Tibial artery (tissue), 4 donors: ENCODE measurements at regions of chr2 and their contacts with region 1.

Region 1: DNA sequence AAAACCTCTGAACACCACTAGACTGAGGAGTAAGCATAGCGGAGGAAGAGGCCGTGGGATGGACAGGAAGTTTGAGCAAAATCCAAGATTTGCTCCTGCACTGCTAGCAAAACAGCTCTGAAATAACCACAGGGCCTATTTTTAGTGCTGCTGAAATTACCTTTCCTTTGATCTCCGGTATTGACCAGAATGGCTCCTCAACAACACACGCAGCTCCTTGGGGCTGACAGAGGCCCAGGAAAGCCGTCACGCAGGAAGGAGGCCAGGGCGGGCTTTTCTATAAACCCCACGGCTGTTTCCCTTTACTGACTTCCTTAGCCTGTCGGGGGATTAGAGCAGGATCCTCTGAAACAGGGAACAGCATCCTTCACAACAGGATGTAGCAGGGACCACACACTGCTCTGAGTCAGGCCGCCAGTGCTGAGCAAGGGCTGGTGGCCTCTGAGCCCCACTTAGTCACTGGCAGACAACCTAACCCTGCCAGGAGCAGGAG is 80.8 kb upstream of the LCLAT1 start:
- DNase-seq: no peak
- H3K4me3 ChIP-seq: no peak overlapping the region
- H3K27ac ChIP-seq: peak overlapping the region; percentile 43 to 79
- H3K4me1 ChIP-seq: peaks cover 0 to 84% (median 47%) of the 10 kb centered on the region in 4 donors
- H3K27me3 ChIP-seq: no peaks in the 10 kb centered on the region
- CTCF ChIP-seq: no peak

Region 2: GRCh38 chr2:29966266-29966665 is 400.0 kb before region 1 on chr2:
- intact Hi-C with region 1: no loop called
- DNase-seq: no peak
- H3K4me3 ChIP-seq: no peak overlapping the region
- H3K27ac ChIP-seq: no peak overlapping the region
- H3K4me1 ChIP-seq: no peaks in the 10 kb centered on the region
- H3K27me3 ChIP-seq: peaks cover 0 to 10% of the 10 kb centered on the region in 2 donors
- CTCF ChIP-seq: no peak

Region 3: GRCh38 chr2:30225131-30225762 is 141.0 kb before region 1 on chr2:
- intact Hi-C with region 1: loop called (anchors 10 kb)
- DNase-seq: no peak
- H3K4me3 ChIP-seq: peak overlapping the region; percentile 17 to 39
- H3K27ac ChIP-seq: peak overlapping the region; percentile 75 to 78
- H3K4me1 ChIP-seq: peaks cover 6 to 36% (median 25%) of the 10 kb centered on the region in 4 donors
- H3K27me3 ChIP-seq: no peaks in the 10 kb centered on the region
- CTCF ChIP-seq: no peak

Region 4: DNA sequence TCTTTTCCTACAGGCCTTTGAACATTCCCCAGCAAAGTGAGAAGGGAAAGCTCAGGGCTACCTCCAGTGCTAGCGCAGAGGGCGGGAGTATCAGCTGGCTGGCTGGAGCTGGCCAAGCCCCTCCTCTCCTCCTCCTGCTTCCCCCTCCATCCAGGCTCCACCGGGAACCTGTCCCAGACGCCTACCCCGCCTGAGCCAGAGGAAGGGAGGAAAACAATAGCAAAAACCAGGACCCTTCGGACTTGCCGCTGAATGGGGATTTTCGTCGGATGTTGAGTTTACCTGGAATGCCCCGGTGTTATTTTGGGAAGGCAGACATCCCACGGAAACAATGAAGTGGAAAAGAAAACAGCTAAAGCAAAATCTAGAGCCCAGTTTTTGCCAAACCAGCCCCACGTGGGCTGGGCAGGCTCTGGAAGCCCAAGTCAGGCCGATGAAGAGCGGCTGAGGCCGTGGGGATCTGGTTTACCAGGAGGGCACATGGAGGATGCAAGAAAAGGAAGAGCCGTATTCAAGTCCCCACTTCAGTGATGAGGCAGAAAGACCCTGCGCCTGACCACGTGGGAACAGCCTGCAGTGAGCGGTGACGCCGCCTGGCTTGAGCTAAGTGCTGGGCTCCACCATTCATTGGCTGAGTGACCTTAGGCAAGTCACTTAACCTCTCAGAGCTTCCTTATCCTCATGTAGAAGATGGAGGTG is 19.6 kb before region 1 on chr2:
- intact Hi-C with region 1: no loop called
- DNase-seq: peak; percentile 59 to 92
- H3K4me3 ChIP-seq: peak overlapping the region; percentile 40 to 56
- H3K27ac ChIP-seq: peak overlapping the region; percentile 80 to 81
- H3K4me1 ChIP-seq: peaks cover 0 to 31% (median 16%) of the 10 kb centered on the region in 4 donors
- H3K27me3 ChIP-seq: no peaks in the 10 kb centered on the region
- CTCF ChIP-seq: no peak

Region 5: DNA sequence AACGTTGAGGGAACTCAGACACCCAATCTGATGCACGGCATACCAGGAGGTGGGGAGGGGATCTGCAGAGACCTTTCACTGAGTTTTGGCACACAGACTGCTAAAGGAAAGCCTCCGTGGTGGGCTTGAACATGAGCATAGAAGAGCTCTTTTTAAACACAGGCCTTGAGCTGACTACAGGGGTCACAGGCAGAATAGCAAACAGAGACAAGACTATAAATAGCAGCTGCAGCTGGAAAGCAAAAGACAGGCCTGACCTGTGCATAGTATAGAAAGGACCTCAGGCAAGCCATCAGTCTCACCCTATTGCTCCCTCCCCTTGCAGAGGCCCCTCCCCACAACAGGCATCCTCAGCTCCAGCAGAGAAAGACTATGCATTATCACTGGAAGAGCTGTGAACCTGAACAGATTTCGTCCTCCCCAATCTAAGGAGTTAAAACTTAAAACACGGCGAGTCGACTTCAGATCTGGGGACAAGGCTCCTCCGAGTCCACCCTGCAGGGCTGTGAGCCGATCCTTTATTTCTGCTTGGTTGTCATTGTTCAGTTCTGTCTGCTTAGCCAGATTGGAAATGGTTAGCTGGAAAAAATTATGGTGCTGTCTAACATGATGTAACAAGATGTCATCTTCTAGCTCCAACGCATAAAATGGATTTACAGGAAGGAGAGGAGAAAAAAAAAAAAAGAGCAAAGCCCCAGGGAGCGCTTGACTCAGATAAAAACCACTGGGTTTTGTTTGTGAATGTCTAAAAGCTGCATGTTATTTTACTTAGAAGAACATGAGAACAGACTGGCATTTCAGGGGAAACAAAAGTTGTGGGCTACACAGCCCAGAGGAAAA is 55.6 kb after region 1 on chr2:
- intact Hi-C with region 1: loop called (anchors 10 kb)
- DNase-seq: no peak
- H3K4me3 ChIP-seq: peak overlapping the region in 1 of 2 donors; percentile 3
- H3K27ac ChIP-seq: peak overlapping the region; percentile 62 to 69
- H3K4me1 ChIP-seq: peaks cover 0 to 57% (median 22%) of the 10 kb centered on the region in 4 donors
- H3K27me3 ChIP-seq: no peaks in the 10 kb centered on the region
- CTCF ChIP-seq: no peak

Region 6: DNA sequence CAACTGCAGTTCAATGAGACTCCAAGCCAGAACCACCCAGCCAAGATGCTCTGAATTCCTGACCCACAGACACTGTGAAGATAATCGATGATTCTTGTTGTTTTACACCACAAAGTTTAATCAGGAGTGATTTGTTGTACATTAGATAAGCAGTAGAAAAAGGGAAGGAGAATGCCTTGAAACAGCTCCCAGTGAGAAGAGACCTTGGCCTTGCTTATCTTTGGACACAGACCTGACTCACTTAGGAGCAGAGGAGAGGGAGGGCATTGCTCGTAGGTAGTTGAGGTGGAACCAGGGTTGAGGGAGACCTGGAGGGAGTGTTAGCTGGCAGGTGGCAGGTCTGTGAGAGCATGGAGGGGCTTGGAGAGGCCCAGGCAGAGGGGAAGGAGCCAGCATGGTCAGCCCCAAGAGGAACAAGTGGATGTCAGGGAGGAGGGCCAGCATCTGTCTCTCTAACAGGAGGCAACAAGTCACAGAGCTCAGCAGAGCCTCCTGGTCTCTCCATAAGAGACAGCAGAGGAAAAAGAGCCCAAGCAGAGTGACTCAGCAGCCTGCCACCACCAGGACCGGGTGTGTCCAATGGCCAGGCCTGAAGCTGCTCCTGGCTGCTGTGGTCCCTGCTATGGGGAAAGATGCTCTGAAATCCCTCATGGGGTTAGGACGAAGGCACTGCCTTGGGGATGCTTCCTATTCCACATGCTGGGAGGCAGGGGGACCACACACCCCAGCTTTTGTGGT is 602.6 kb after region 1 on chr2:
- intact Hi-C with region 1: no loop called
- DNase-seq: no peak
- H3K4me3 ChIP-seq: no peak overlapping the region
- H3K27ac ChIP-seq: no peak overlapping the region
- H3K4me1 ChIP-seq: no peaks in the 10 kb centered on the region
- H3K27me3 ChIP-seq: peaks cover 0 to 29% of the 10 kb centered on the region in 2 donors
- CTCF ChIP-seq: no peak